Breast epithelium (tissue), 4 donors: ENCODE measurements at regions of chr11 and their contacts with region 1.

Region 1: DNA sequence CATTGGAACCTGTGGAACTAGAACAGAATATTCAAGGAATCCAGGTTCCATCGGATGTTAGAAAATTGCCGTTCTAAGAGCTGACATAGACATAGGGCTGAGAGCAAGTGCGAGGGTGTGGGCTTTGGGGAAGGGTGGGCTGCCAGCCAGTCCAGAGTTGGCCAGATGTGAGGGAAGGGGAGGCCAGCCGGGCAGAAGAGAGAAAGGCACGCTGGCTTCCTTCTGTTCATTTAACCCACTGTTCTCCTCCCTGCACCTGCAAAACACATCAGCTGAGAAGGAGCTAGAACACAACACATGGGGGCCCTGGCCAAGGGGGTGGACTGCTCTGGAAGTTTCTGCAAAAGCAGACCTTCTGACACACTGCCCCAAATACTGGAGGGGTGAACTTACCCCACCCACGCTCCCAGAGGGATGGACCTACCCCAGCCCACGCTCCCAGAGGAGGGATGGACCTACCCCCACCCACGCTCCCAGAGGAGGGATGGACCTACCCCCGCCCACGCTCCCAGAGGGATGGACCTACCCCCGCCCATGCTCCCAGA is 98.0 kb downstream of the SHANK2 start:
- DNase-seq: no peak
- H3K4me3 ChIP-seq: no peak overlapping the region
- H3K27ac ChIP-seq: no peak overlapping the region
- H3K4me1 ChIP-seq: no peaks in the 10 kb centered on the region
- H3K27me3 ChIP-seq: no peaks in the 10 kb centered on the region
- CTCF ChIP-seq: no peak
- POLR2A ChIP-seq: no peak

Region 2: DNA sequence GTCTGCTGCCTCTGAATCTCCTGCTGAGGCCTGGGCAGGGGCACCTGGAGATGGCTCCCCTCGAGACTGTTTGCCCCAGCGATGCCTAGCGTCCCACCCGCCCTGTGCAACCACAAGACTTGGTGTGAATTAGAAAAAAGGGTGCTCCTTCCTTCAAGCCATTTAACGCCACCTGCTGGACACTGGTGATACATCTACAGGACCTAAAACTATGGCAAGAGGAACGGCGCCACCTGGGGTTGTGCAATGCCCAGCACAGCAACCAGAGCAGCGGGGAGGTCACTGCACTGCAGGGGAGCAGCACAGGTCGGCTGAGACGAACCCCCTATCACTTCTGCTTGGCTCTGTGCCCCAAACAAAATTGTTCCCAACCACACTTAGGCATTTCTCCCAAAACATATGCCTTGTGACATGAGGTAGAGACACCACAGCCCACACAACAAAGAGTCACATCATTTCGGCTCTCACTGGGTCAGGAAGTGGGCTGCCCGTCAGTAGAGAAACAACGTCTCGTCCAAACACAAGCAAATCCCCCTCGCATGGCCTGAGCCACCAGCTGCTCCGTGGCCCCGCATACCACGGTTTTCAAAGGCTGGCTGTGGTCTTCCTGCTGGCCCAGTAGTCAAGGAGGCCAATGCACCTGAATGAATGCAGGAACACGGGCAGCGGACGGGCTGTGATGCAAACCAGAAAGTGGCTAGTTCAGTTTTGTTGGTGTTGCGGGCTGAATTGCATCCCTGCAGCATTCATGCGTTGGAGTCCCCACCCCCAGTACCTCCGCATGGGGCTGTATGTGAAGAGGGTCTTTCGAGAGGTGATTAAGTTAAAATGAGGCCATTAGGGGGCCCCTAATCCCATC is 73.9 kb before region 1 on chr11:
- intact Hi-C with region 1: loop called (anchors 2 kb)
- DNase-seq: peak in 1 of 2 donors; percentile 27
- H3K4me3 ChIP-seq: no peak overlapping the region
- H3K27ac ChIP-seq: no peak overlapping the region
- H3K4me1 ChIP-seq: no peaks in the 10 kb centered on the region
- H3K27me3 ChIP-seq: no peaks in the 10 kb centered on the region
- CTCF ChIP-seq: peak in 2 of 3 donors; percentile 42 to 45
- POLR2A ChIP-seq: no peak

Region 3: GRCh38 chr11:72439455-72439854 is 1285.1 kb after region 1 on chr11:
- intact Hi-C with region 1: no loop called
- DNase-seq: no peak
- H3K4me3 ChIP-seq: no peak overlapping the region
- H3K27ac ChIP-seq: peak overlapping the region in 1 of 2 donors; percentile 1
- H3K4me1 ChIP-seq: no peaks in the 10 kb centered on the region
- H3K27me3 ChIP-seq: no peaks in the 10 kb centered on the region
- CTCF ChIP-seq: no peak
- POLR2A ChIP-seq: no peak